Activated CD4-positive, alpha-beta T cell treated with anti-CD3 and anti-CD28 coated beads for 36 hours (primary cell): ENCODE measurements at regions of chr1 and their contacts with region 1.

Region 1: GRCh38 chr1:36385410-36386257 is at the start of gene STK40:
- DNase-seq: peak; percentile 99
- ATAC-seq: peak; percentile 88
- H3K4me3 Mint-ChIP-seq: peak within 1 kb of the TSS; percentile 81
- H3K27ac Mint-ChIP-seq: peak within 1 kb of the TSS; percentile 100
- H3K4me1 Mint-ChIP-seq: peaks cover 58% of the 10 kb centered on the region
- H3K27me3 Mint-ChIP-seq: no peaks in the 10 kb centered on the region
- total RNA-seq, gene STK40: 38.8 to 51.3 TPM

Region 2: GRCh38 chr1:35557292-35558063 is 828.2 kb before region 1 on chr1 and contains the starts of genes KIAA0319L and NCDN:
- CTCF ChIA-PET with region 1: no interaction called
- POLR2A ChIA-PET with region 1: no interaction called
- intact Hi-C with region 1: loop called in 1 of 2 experiments (anchors 10 kb)
- DNase-seq: peak; percentile 99
- ATAC-seq: peak; percentile 92
- H3K4me3 Mint-ChIP-seq: peak within 1 kb of the TSS; percentile 98
- H3K27ac Mint-ChIP-seq: peak within 1 kb of the TSS; percentile 97
- H3K4me1 Mint-ChIP-seq: peaks cover 45% of the 10 kb centered on the region
- H3K27me3 Mint-ChIP-seq: no peaks in the 10 kb centered on the region
- total RNA-seq, gene KIAA0319L: 26.5 to 28.1 TPM
- total RNA-seq, gene NCDN: 21.1 to 23.4 TPM

Region 3: GRCh38 chr1:36088575-36089443 is 296.8 kb before region 1 on chr1 and contains the start of gene ADPRS:
- CTCF ChIA-PET with region 1: no interaction called
- POLR2A ChIA-PET with region 1: no interaction called
- intact Hi-C with region 1: loop called in 1 of 2 experiments (anchors 1 kb)
- DNase-seq: peak; percentile 95
- ATAC-seq: peak; percentile 89
- H3K4me3 Mint-ChIP-seq: peak within 1 kb of the TSS; percentile 88
- H3K27ac Mint-ChIP-seq: peak within 1 kb of the TSS; percentile 96
- H3K4me1 Mint-ChIP-seq: peaks cover 19% of the 10 kb centered on the region
- H3K27me3 Mint-ChIP-seq: peaks cover 16% of the 10 kb centered on the region
- total RNA-seq, gene ADPRS: 34.0 to 43.9 TPM

Region 4: DNA sequence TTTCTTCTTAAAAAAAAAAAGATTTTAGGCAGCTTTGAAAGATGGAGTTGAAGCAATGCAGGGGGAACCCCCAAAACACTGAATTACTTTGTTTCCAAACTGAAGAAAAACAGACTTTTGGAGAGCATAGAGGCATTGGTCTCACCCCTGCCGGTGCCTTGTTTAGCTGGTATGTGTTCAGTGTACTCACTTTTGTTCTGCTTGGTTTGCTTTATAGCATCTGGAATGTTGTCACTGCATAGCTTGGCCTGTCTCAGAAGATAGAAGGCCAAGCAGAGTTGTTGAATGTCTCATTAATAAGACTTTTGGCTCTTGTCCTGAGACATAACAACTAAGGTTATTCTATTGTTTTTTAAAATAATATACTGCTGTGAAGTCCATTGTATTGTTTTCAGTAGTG is 154.4 kb before region 1 on chr1:
- CTCF ChIA-PET with region 1: no interaction called
- POLR2A ChIA-PET with region 1: interaction called, 15 read pairs
- intact Hi-C with region 1: no loop called
- DNase-seq: no peak
- ATAC-seq: no peak
- H3K4me3 Mint-ChIP-seq: no peak overlapping the region
- H3K27ac Mint-ChIP-seq: no peak overlapping the region
- H3K4me1 Mint-ChIP-seq: peaks cover 54% of the 10 kb centered on the region
- H3K27me3 Mint-ChIP-seq: no peaks in the 10 kb centered on the region

Region 5: DNA sequence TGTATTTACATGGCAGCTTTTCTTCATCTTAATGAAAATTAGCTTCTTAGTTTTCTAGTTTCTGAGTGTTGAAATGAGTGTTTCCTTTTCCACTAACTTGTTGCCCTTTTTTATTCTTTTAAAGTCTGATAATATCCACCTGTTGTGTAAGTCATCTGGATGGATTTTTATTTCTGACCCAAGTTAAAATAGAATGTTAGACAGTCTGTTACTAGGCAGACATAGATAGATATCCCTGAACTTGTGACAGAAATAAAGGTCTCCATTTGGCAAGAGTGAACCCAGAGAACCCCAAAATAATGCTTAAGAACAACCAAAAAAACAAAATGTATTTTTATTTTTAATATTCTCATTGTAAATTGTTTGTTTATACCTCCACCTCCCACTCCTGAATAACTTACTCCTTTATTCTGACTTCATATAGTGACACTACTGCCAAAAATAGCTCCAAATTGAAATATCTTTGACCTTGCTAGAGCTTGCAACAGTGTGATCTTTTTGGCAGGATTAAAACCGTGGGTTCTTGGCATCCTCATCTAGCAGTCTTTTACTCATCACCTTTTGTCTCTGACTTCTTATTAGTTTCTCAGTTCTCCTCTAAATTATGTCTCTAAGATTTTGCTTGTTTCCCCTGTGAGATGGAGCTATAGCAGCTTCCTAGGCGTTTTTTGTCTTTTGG is 106.4 kb before region 1 on chr1:
- CTCF ChIA-PET with region 1: no interaction called
- POLR2A ChIA-PET with region 1: no interaction called
- intact Hi-C with region 1: no loop called
- DNase-seq: no peak
- ATAC-seq: no peak
- H3K4me3 Mint-ChIP-seq: no peak overlapping the region
- H3K27ac Mint-ChIP-seq: peak overlapping the region; percentile 81
- H3K4me1 Mint-ChIP-seq: peaks cover 40% of the 10 kb centered on the region
- H3K27me3 Mint-ChIP-seq: no peaks in the 10 kb centered on the region

Region 6: GRCh38 chr1:36369061-36369861 is 16.4 kb before region 1 on chr1:
- CTCF ChIA-PET with region 1: interaction called, 14 read pairs
- POLR2A ChIA-PET with region 1: interaction called, 5 read pairs
- intact Hi-C with region 1: no loop called
- DNase-seq: peak; percentile 92
- ATAC-seq: peak; percentile 35
- H3K4me3 Mint-ChIP-seq: no peak overlapping the region
- H3K27ac Mint-ChIP-seq: peak overlapping the region; percentile 76
- H3K4me1 Mint-ChIP-seq: peaks cover 69% of the 10 kb centered on the region
- H3K27me3 Mint-ChIP-seq: no peaks in the 10 kb centered on the region

Region 7: DNA sequence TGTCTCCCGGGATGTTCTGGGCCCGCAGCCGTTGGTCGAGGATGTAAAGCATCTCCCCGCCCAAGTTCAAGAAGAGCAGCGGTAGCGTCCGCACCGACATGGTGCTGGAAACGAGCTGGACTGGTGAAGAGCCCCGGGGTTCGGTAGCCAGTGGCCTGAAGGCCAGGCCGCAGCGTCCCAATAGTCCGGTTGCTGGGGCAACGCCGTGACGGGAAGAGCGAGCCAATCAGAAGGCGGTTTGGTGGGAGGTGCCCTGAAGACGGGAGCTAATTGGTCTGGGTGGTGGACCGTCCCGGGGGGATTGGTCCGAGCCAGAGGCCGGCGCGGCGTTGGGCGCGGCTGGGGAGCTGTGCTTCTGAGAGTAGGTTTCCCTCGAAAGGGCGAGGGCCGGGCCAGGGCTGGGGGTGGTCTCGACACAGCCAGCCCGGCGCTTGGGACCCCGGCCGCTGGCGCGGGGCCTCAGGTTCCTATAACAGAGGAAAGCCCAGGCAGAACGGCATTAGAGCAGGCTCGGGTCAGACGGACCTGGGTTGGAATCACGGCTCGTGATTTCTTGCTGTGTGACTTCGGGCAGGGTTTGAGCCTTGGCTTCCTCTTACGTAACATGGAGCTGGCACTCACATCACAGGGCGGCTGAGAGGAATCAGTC is 64.8 kb after region 1 on chr1 and contains the start of gene OSCP1:
- CTCF ChIA-PET with region 1: no interaction called
- POLR2A ChIA-PET with region 1: no interaction called
- intact Hi-C with region 1: loop called in 1 of 2 experiments (anchors 1 kb)
- DNase-seq: peak; percentile 91
- ATAC-seq: peak; percentile 98
- H3K4me3 Mint-ChIP-seq: peak within 1 kb of the TSS; percentile 83
- H3K27ac Mint-ChIP-seq: peak within 1 kb of the TSS; percentile 83
- H3K4me1 Mint-ChIP-seq: peaks cover 16% of the 10 kb centered on the region
- H3K27me3 Mint-ChIP-seq: no peaks in the 10 kb centered on the region
- total RNA-seq, gene OSCP1: 2.2 to 2.8 TPM

Region 8: DNA sequence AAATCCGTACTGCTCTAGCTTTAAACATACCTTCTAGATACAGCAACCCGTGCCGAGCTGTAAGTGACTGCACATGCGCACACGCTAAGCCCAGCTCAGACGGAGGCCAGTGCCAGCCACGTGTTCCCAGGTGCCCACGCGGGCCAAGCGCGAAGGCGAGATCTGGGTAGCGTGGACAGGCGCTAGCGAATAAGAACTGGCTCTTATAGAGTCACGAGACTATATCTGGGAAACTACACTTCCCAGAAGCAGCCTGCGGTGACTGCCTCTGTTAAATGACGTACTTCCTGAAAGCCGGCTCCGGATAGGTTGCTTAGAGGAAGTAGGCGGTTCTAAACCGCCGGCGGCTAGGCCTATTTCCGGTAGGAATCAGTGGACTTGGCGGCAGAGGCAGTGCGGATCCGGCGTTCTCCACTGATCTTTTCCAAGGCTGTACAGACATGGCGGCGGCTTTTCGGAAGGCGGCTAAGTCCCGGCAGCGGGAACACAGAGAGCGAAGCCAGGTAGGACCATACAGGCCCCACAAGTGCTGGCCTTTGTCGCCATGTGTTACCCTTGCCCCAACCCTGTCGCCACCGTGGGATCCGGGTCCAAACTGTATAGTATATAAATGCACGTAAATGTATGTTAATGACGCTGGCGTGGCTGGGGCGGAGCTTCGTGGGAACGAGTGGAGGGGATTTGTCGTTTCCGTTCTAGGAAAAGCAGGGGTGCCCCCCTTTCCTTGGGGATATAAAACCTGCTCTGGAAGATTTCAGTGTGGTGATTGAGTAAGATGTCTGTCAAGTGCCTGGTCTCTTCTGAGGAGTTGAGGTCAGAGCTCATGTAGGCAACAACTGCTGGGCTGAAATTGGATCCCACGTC is 1627.0 kb after region 1 on chr1 and contains the start of gene UTP11:
- CTCF ChIA-PET with region 1: no interaction called
- POLR2A ChIA-PET with region 1: no interaction called
- intact Hi-C with region 1: loop called in 1 of 2 experiments (anchors 5 kb)
- DNase-seq: peak; percentile 94
- ATAC-seq: peak; percentile 81
- H3K4me3 Mint-ChIP-seq: peak within 1 kb of the TSS; percentile 97
- H3K27ac Mint-ChIP-seq: peak within 1 kb of the TSS; percentile 95
- H3K4me1 Mint-ChIP-seq: peaks cover 51% of the 10 kb centered on the region
- H3K27me3 Mint-ChIP-seq: no peaks in the 10 kb centered on the region
- total RNA-seq, gene UTP11: 68.9 to 82.4 TPM